ENCODE measurements at regions of chr11 and their contacts with region 1.

Region 1: GRCh38 chr11:85810871-85811611 is at the start of gene SYTL2:
- DNase-seq: peak; percentile 79 to 87
- ATAC-seq: peak; percentile 87 to 97 (median 95)
- H3K4me3 ChIP-seq: peak within 1 kb of the TSS; percentile 61
- H3K4me3 Mint-ChIP-seq: peak within 1 kb of the TSS; percentile 96
- H3K27ac ChIP-seq: peak within 1 kb of the TSS; percentile 49
- H3K27ac Mint-ChIP-seq: peak within 1 kb of the TSS; percentile 91 to 95
- H3K4me1 ChIP-seq: peaks cover 30% of the 10 kb centered on the region
- H3K4me1 Mint-ChIP-seq: peaks cover 37 to 38% of the 10 kb centered on the region in 2 donors
- H3K27me3 ChIP-seq: no peaks in the 10 kb centered on the region
- H3K27me3 Mint-ChIP-seq: peaks cover 0 to 3% of the 10 kb centered on the region in 2 donors
- CTCF ChIP-seq: no peak
- total RNA-seq, gene SYTL2: 116 to 237 (median 143) TPM

Region 2: DNA sequence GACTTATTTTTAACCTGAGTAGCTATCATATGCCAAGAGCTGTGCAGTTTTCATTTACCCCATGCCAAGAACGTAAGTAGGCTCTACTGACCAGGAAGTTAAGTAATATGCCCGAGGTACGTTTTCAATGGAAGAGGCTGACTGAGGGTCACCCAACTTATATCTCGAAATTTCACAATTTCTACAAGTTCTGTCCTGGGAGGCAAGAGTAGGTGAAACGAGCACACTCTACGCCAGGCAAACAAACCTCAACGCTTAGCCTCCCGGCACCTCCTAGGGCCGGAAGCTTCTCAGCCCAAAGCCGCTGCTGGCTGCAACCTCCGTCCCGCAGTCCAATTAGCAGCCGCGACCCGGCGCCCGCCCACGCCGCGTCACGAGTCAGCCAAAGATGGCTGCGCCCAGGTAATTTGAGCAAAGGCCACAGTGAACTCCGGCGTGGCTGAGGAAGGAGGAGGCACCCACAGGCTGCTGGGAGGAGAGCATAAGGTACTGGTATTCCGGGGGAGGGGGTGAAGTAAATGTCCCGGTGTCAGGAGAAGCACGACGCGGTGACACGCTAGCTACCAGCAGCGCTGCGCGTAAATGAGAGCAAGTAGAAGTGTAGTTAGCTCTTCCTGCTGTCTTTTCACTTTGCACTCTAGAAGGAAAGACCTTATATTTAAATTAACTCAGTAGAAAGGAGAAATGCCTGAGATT is 163.3 kb before region 1 on chr11 and contains the start of gene TMEM126A:
- intact Hi-C with region 1: loop called (anchors 5 kb)
- DNase-seq: peak; percentile 86 to 94
- ATAC-seq: peak; percentile 99 to 100 (median 99)
- H3K4me3 ChIP-seq: peak within 1 kb of the TSS; percentile 79
- H3K4me3 Mint-ChIP-seq: peak within 1 kb of the TSS; percentile 100
- H3K27ac ChIP-seq: peak within 1 kb of the TSS; percentile 68
- H3K27ac Mint-ChIP-seq: peak within 1 kb of the TSS; percentile 94 to 98
- H3K4me1 ChIP-seq: peaks cover 8% of the 10 kb centered on the region
- H3K4me1 Mint-ChIP-seq: peaks cover 27 to 28% of the 10 kb centered on the region in 2 donors
- H3K27me3 ChIP-seq: peaks cover 10% of the 10 kb centered on the region
- H3K27me3 Mint-ChIP-seq: peaks cover 25 to 31% of the 10 kb centered on the region in 2 donors
- CTCF ChIP-seq: no peak
- total RNA-seq, gene TMEM126A: 16.8 to 27.6 (median 23.2) TPM

Region 3: DNA sequence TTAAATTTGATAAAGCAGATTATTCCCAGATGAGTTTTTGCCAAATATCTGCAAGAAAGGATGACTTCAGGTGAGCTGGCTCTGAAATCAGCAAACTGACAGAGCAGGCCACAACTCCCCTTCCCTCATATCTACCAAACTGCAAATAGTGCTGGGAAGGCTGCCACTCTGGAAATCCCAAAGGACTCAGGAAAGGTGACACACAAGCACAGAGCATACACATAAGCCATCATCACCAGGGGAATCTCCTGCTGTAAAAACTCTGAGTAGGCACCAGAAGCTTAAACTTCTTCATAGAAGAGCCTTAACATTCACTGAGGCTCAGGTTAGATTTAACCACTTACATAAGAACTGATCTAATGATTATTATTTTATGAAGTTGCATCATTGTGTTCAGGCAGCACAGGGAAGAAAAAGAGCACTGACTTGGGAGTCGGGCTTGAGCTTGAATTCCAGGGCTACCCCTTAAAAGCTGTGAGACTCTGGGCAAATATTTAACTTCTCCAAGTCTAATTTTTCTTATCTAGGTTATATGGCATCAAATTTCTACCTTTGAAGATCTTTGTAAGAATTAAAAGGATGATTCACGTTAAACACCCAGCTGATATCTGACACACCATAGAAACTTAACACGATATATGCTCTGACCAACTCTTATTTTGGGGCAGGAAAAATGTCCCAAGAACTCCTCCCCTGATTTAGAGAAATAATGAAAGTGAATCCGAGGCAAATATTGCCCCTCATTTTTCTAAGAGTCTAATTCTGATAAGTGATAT is 15.1 kb before region 1 on chr11:
- intact Hi-C with region 1: loop called (anchors 2 kb)
- DNase-seq: no peak
- ATAC-seq: no peak
- H3K4me3 ChIP-seq: no peak overlapping the region
- H3K4me3 Mint-ChIP-seq: no peak overlapping the region
- H3K27ac ChIP-seq: no peak overlapping the region
- H3K27ac Mint-ChIP-seq: peak overlapping the region; percentile 35 to 73
- H3K4me1 ChIP-seq: peaks cover 9% of the 10 kb centered on the region
- H3K4me1 Mint-ChIP-seq: peaks cover 59 to 61% of the 10 kb centered on the region in 2 donors
- H3K27me3 ChIP-seq: no peaks in the 10 kb centered on the region
- H3K27me3 Mint-ChIP-seq: no peaks in the 10 kb centered on the region
- CTCF ChIP-seq: no peak

Region 4: GRCh38 chr11:85826116-85826855 is 15.2 kb after region 1 on chr11:
- intact Hi-C with region 1: loop called (anchors 2 kb)
- DNase-seq: peak in 1 of 2 donors; percentile 48
- ATAC-seq: no peak
- H3K4me3 ChIP-seq: no peak overlapping the region
- H3K4me3 Mint-ChIP-seq: no peak overlapping the region
- H3K27ac ChIP-seq: peak overlapping the region; percentile 63
- H3K27ac Mint-ChIP-seq: peak overlapping the region; percentile 82 to 91
- H3K4me1 ChIP-seq: peaks cover 43% of the 10 kb centered on the region
- H3K4me1 Mint-ChIP-seq: peaks cover 34 to 36% of the 10 kb centered on the region in 2 donors
- H3K27me3 ChIP-seq: no peaks in the 10 kb centered on the region
- H3K27me3 Mint-ChIP-seq: no peaks in the 10 kb centered on the region
- CTCF ChIP-seq: no peak

Measured in natural killer cell (primary cell).